ENCODE measurements at regions of chr2 and their contacts with region 1.

Region 1: DNA sequence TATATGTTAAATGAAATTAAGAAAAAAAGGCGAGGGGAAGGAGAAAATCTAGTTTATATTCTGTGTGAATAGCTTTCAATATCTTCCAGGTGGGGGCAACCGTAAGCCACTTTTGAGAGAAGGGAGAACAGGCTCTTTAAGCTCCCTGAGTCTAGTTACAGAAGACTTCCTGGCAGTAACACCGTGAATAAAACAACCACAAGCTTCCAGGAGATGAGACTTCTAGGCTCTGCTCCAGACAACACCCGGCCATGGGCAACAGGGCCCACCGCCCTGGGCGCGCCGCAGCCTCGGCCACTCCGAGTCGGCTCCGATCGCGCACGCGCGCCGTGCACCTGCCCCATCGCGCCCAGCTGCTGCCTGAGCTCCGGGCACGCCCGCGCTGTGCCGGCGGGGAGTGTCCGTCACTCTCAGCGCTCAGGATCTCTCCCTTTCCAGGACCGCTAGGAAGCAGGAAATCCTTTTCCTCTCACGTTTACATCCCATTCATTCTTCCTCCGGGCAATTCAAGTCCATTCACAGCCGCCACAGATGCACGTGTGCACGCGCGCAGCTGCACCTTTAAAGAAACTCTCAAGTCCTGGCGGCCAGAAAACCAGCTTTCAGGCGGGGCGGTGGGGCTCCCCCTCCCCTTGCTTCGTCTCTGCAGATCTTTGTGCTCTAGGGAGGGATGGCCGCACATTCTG is 19.4 kb upstream of the PAX3 start:
- DNase-seq: peak; percentile 69
- ATAC-seq: peak; percentile 50
- H3K4me3 ChIP-seq: peak overlapping the region; percentile 11 to 56 (median 43)
- H3K4me3 Mint-ChIP-seq: peak overlapping the region; percentile 89
- H3K27ac ChIP-seq: no peak overlapping the region
- H3K27ac Mint-ChIP-seq: peak overlapping the region; percentile 2
- H3K4me1 ChIP-seq: peaks cover 12% of the 10 kb centered on the region in 2 donors
- H3K4me1 Mint-ChIP-seq: peaks cover 15% of the 10 kb centered on the region
- H3K27me3 ChIP-seq: peaks cover 2 to 44% (median 28%) of the 10 kb centered on the region in 4 experiments
- H3K27me3 Mint-ChIP-seq: peaks cover 64% of the 10 kb centered on the region
- CTCF ChIP-seq: peak; percentile 58

Region 2: DNA sequence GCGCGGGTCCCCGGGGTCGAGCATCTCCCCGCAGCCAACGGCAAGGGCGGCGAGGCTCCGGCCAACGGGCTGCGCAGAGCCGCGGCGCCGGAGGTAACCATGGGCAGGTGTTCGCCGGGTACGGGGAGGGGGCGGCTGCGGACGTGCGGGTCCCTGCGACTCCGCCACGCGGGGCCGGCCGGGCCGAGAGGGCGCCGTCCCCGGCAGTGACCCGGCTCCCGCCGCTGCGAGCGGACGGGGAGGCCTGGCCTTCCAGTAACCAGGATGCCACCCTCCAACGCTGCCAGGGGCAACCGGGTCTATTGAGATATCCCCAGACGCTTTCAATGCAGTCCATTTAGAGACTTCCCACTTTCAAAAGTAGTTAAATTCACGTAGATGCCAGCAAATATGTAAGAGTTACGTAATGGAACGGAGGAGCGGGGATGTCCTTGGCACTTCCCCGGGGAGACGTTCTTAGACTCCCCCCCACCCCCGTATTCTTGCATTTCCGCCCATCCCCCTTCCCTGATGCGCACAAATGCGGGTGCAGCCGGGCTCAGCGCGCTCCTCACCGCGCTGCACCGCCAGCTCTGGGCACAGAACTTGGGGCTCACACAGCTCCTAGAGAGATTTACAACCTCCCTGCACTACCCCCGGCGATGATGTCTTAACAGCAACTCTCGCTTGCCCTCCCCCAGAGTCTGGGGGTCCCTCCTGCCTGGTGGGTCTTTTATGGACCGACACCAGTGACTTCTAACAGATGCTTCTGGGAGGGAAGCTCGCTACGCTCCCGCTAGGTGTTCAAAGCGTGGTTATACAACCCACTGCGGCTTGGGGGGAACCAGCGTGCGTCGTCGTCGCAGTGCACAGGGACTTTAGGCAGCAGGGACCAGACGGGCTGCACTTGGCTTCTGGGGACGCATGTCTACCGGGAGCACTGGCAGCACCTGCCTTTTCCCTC is 106.8 kb after region 1 on chr2:
- CTCF ChIA-PET with region 1: interaction called, 8 read pairs
- POLR2A ChIA-PET with region 1: interaction called, 9 read pairs
- intact Hi-C with region 1: loop called (anchors 2 kb)
- DNase-seq: peak; percentile 57
- ATAC-seq: peak; percentile 34
- H3K4me3 ChIP-seq: peak overlapping the region in 4 of 5 experiments; percentile 19 to 61 (median 52)
- H3K4me3 Mint-ChIP-seq: peak overlapping the region; percentile 94
- H3K27ac ChIP-seq: peak overlapping the region in 1 of 2 donors; percentile 14
- H3K27ac Mint-ChIP-seq: peak overlapping the region; percentile 87
- H3K4me1 ChIP-seq: peaks cover 14 to 45% of the 10 kb centered on the region in 2 donors
- H3K4me1 Mint-ChIP-seq: peaks cover 45% of the 10 kb centered on the region
- H3K27me3 ChIP-seq: peaks cover 0 to 31% (median 8%) of the 10 kb centered on the region in 4 experiments
- H3K27me3 Mint-ChIP-seq: peaks cover 34% of the 10 kb centered on the region
- CTCF ChIP-seq: no peak

Region 3: DNA sequence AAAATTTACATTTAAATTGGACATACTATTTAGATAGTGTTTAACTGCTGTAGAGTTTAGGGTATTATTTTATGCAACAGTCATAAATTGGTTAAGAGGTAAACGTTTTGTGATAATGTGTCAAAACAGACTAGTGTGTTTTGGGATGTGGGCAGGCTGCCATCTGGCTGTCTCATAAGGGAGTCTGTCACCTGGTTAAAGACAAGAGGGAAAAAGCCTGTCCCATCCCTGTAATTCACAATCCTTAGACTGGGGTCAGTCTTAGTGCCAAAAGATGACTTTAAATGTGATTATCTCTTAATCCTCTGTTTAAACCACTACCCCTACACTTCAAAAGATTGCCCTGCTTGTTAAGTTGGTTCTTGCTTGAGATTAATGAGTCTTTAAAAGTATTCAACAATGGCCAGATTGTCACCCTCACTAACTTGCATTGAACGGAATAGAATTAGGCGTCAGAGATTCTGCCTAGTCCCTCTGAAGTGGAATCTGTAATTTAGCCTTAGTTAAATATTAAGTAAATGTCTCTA is 165.4 kb after region 1 on chr2:
- CTCF ChIA-PET with region 1: interaction called, 30 read pairs
- POLR2A ChIA-PET with region 1: no interaction called
- intact Hi-C with region 1: loop called (anchors 1 kb)
- DNase-seq: peak; percentile 9
- ATAC-seq: no peak
- H3K4me3 ChIP-seq: no peak overlapping the region
- H3K4me3 Mint-ChIP-seq: no peak overlapping the region
- H3K27ac ChIP-seq: no peak overlapping the region
- H3K27ac Mint-ChIP-seq: no peak overlapping the region
- H3K4me1 ChIP-seq: no peaks in the 10 kb centered on the region
- H3K4me1 Mint-ChIP-seq: no peaks in the 10 kb centered on the region
- H3K27me3 ChIP-seq: peaks cover 0 to 2% (median 0%) of the 10 kb centered on the region in 4 experiments
- H3K27me3 Mint-ChIP-seq: no peaks in the 10 kb centered on the region
- CTCF ChIP-seq: no peak

Region 4: GRCh38 chr2:222561817-222562645 is 243.9 kb after region 1 on chr2:
- CTCF ChIA-PET with region 1: interaction called, 71 read pairs
- POLR2A ChIA-PET with region 1: no interaction called
- intact Hi-C with region 1: no loop called
- DNase-seq: peak; percentile 50
- ATAC-seq: peak; percentile 61
- H3K4me3 ChIP-seq: no peak overlapping the region
- H3K4me3 Mint-ChIP-seq: no peak overlapping the region
- H3K27ac ChIP-seq: no peak overlapping the region
- H3K27ac Mint-ChIP-seq: no peak overlapping the region
- H3K4me1 ChIP-seq: no peaks in the 10 kb centered on the region
- H3K4me1 Mint-ChIP-seq: no peaks in the 10 kb centered on the region
- H3K27me3 ChIP-seq: no peaks in the 10 kb centered on the region
- H3K27me3 Mint-ChIP-seq: no peaks in the 10 kb centered on the region
- CTCF ChIP-seq: peak; percentile 58

Region 5: GRCh38 chr2:222613715-222614331 is 295.7 kb after region 1 on chr2:
- CTCF ChIA-PET with region 1: interaction called, 16 read pairs
- POLR2A ChIA-PET with region 1: interaction called, 4 read pairs
- intact Hi-C with region 1: loop called (anchors 1 kb)
- DNase-seq: peak; percentile 47
- ATAC-seq: peak; percentile 51
- H3K4me3 ChIP-seq: no peak overlapping the region
- H3K4me3 Mint-ChIP-seq: no peak overlapping the region
- H3K27ac ChIP-seq: no peak overlapping the region
- H3K27ac Mint-ChIP-seq: no peak overlapping the region
- H3K4me1 ChIP-seq: no peaks in the 10 kb centered on the region
- H3K4me1 Mint-ChIP-seq: no peaks in the 10 kb centered on the region
- H3K27me3 ChIP-seq: no peaks in the 10 kb centered on the region
- H3K27me3 Mint-ChIP-seq: no peaks in the 10 kb centered on the region
- CTCF ChIP-seq: peak; percentile 80

Region 6: DNA sequence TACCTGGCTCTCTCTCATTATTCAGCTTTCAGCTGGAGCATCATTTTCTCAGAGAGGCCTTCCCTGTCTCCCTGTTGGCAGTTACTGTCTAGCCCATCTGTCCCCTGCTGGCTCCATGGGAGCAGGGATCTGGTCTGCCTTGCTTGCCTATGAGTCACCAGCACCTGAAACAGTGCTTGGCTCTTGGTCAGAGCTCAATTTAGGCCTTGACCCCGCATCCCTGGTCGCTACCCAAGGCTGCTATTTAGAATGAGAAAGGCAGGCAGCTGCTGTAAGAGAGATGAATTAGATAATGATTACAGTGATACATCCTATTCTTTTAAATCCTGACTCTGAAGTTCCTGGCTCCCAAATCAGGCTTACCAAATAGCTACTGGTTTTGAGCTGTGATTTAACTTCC is 766.7 kb after region 1 on chr2:
- CTCF ChIA-PET with region 1: no interaction called
- POLR2A ChIA-PET with region 1: no interaction called
- intact Hi-C with region 1: no loop called
- DNase-seq: no peak
- ATAC-seq: no peak
- H3K4me3 ChIP-seq: no peak overlapping the region
- H3K4me3 Mint-ChIP-seq: no peak overlapping the region
- H3K27ac ChIP-seq: no peak overlapping the region
- H3K27ac Mint-ChIP-seq: no peak overlapping the region
- H3K4me1 ChIP-seq: no peaks in the 10 kb centered on the region
- H3K4me1 Mint-ChIP-seq: no peaks in the 10 kb centered on the region
- H3K27me3 ChIP-seq: no peaks in the 10 kb centered on the region
- H3K27me3 Mint-ChIP-seq: peaks cover 3% of the 10 kb centered on the region
- CTCF ChIP-seq: no peak